ENCODE measurements at regions of chr13 and their contacts with region 1.

Region 1: DNA sequence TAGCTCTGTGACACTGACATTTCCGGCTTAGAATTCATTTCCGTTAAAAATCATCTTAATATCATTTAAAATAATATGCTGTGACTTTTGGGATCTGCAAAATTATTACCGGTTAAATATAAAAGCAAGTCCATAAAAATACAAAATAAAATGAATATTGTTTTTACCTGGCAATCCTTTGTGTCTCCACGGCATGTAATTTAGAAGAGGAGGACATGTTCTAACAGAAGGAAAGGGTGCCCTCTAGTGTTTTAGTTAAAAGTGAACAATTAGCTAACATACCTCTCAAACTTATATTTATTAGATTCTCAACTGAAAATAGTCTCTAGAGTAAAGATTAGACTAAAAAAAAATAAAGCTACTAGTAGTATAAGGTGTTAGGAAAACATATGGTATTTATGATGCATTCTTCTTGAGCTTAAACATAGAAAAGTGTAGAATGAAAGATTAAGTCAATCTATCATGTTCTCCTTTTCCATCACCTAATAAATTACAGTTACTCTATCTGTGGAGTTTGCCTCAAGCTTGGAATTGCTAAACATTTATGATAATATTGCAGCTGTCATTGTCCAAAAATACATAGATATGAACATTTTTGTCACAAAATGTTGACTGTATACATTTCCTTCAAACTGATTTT is 676.7 kb upstream of the SPRY2 start:
- DNase-seq: peak; percentile 62
- H3K4me3 ChIP-seq: no peak overlapping the region
- H3K27ac ChIP-seq: no peak overlapping the region
- H3K4me1 ChIP-seq: no peaks in the 10 kb centered on the region
- H3K27me3 ChIP-seq: no peaks in the 10 kb centered on the region
- CTCF ChIP-seq: peak; percentile 72

Region 2: DNA sequence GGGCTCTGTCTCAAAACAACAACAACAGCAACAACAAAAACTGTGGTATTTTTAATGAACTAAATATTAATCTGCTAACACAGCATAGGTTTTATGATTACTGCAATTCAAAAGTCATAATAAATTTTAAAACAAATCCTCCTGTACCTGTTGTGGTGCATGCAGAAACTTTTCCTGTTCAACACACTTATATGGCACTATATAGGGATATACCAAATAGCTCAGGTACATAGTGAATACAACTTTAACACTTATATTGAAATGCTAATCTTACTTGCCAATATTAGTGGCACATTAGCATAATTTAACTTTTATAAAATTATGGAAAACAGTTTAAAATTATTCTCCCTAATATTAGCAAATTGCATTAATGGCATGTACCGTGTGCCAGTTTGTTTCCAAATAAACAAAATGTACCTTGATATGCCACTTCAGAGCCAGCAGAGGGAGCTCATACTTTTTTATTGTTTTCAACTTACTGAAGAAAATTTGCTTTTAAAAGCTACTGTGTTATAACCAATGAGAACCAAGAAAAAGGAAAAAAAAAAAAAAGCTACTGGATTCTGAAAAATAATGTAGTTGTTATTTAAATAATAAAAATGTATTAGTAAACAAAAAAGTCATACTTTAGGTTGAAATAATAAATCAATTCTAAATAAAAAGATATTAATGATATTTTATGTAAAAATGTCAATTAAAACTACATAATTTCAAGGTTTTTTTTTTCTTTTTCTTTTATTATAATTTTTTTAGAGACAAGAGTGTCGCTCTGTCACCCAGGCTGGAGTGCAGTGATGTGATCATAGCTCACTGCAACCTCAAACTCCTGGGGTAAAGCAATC is 1593.6 kb before region 1 on chr13:
- CTCF ChIA-PET with region 1: no interaction called
- POLR2A ChIA-PET with region 1: no interaction called
- intact Hi-C with region 1: loop called (anchors 10 kb)
- DNase-seq: peak; percentile 65
- H3K4me3 ChIP-seq: no peak overlapping the region
- H3K27ac ChIP-seq: no peak overlapping the region
- H3K4me1 ChIP-seq: no peaks in the 10 kb centered on the region
- H3K27me3 ChIP-seq: no peaks in the 10 kb centered on the region
- CTCF ChIP-seq: peak; percentile 71

Region 3: GRCh38 chr13:79679334-79679733 is 1338.3 kb before region 1 on chr13:
- CTCF ChIA-PET with region 1: no interaction called
- POLR2A ChIA-PET with region 1: no interaction called
- intact Hi-C with region 1: loop called (anchors 5 kb)
- DNase-seq: peak; percentile 80
- H3K4me3 ChIP-seq: no peak overlapping the region
- H3K27ac ChIP-seq: no peak overlapping the region
- H3K4me1 ChIP-seq: no peaks in the 10 kb centered on the region
- H3K27me3 ChIP-seq: no peaks in the 10 kb centered on the region
- CTCF ChIP-seq: peak; percentile 93

Region 4: DNA sequence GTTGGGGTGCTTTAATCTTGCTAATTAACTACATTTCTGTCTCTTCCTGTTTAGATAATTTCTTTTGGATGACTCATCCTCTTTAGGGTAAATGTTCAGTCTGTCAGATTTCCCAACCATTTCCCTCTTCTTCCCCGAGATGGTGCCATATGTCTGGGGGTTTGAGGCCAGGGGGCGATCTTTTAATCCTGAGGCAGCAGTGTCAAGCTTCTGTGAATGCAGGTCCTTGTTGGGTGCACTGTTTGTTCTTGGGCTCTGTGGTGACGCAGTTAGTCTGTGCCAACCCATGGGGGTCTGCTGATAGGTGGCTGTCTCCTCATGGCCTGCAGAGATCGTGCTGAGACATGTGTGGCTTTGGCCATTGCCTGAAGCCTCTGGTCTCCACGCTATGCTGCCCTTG is 1116.3 kb before region 1 on chr13:
- CTCF ChIA-PET with region 1: no interaction called
- POLR2A ChIA-PET with region 1: no interaction called
- intact Hi-C with region 1: loop called (anchors 10 kb)
- DNase-seq: peak; percentile 93
- H3K4me3 ChIP-seq: no peak overlapping the region
- H3K27ac ChIP-seq: no peak overlapping the region
- H3K4me1 ChIP-seq: peaks cover 33% of the 10 kb centered on the region
- H3K27me3 ChIP-seq: no peaks in the 10 kb centered on the region
- CTCF ChIP-seq: peak; percentile 58

Region 5: DNA sequence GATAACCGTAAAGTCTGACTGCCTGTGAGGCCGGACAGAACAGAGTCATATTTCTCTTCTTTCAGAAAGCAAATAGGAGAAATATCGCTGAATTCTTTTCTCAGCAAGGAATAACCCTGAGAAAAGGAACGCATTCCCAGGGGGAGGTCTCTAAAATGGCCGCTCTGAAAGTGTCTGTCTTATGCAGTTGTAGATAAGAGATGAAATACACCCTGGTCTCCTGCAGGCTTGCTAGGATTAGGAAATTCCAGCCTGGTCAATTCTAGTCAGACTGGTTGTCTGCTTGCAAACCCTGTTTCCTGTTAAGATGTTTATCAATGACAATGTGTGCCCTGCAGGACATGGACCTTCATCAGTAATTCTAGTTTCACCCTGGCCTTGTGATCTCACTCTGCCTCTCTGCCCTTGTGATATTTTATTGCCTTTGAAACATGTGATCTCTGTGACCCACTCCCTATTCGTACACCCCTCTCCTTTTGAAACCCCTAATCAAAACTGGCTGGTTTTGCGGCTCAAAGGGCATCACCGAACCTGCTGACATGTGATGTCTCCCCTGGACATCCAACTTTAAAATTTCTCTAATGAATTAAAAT is 258.1 kb after region 1 on chr13:
- CTCF ChIA-PET with region 1: no interaction called
- POLR2A ChIA-PET with region 1: no interaction called
- intact Hi-C with region 1: no loop called
- DNase-seq: no peak
- H3K4me3 ChIP-seq: no peak overlapping the region
- H3K27ac ChIP-seq: no peak overlapping the region
- H3K4me1 ChIP-seq: no peaks in the 10 kb centered on the region
- H3K27me3 ChIP-seq: no peaks in the 10 kb centered on the region
- CTCF ChIP-seq: no peak

Region 6: DNA sequence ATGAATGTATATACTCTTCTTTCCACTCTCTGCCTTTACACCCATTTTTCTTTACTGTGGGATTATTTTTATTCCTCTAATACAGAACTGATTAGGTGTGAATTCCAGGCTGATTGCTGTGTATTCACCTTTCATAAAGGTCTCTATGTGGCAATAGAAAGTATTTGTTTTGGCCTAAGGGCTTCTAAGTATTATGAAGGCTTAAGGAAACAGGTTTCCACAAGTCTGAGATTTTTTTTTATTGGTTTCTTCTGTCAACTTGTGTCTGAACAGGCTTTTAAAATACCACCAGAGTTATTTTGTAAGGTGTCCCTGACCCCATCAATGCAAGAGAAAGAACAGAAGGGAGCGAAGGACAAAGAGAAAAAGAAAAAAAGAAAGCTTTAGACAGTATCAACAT is 425.3 kb after region 1 on chr13:
- CTCF ChIA-PET with region 1: interaction called, 10 read pairs
- POLR2A ChIA-PET with region 1: no interaction called
- intact Hi-C with region 1: no loop called
- DNase-seq: no peak
- H3K4me3 ChIP-seq: no peak overlapping the region
- H3K27ac ChIP-seq: no peak overlapping the region
- H3K4me1 ChIP-seq: no peaks in the 10 kb centered on the region
- H3K27me3 ChIP-seq: no peaks in the 10 kb centered on the region
- CTCF ChIP-seq: no peak

Measured in A673 (cell line).